ENCODE measurements at regions of chrX and their contacts with region 1.

Region 1: DNA sequence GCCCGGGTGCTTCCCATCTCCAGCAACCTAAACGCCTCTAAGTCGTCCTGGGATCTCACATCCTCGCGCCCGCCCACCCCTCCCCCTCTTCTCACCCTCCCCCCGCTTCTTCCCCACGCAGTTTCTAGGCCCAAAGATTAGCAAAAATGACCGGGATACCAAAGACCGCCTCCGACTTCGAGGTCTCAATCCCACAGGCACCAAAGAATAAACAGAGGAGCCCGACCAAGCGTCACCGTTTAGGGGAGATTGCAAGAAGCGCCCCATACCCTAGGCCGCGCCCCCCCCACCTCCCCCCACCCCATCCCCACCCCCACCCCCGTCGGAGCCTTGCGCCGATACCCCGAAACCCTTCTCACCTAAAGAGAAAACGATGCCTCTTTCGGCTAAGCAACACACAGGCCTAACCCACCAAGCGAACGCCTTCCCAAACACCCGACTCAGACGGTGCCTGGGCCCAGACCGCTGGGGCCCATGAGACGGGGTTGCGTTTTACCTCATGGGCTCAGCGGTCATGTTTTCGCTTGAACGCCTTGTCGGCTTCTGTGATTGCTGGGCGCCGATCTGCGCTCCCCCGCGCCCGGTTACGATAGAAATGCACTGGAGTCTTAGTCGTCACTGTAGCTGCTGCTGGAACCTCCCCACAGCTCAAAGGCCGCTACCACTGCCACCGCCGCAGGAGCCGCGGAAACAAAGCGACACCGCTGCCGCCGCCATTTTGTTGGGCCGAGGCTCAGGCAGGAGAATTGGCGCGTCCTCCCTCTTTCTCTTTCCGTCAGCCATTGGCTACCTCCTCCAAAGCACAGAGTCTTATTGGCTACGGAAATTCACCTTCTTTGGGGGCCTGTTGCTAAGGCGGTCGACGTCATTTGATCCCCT is at the start of gene ATRX:
- DNase-seq: peak; percentile 86
- ATAC-seq: peak; percentile 93
- H3K4me3 ChIP-seq: peak within 1 kb of the TSS; percentile 70 to 89 (median 77)
- H3K4me3 Mint-ChIP-seq: peak within 1 kb of the TSS; percentile 100
- H3K27ac ChIP-seq: peak within 1 kb of the TSS; percentile 96 to 97
- H3K27ac Mint-ChIP-seq: peak within 1 kb of the TSS; percentile 100
- H3K4me1 ChIP-seq: peaks cover 6 to 29% of the 10 kb centered on the region in 2 donors
- H3K4me1 Mint-ChIP-seq: peaks cover 40% of the 10 kb centered on the region
- H3K27me3 ChIP-seq: no peaks in the 10 kb centered on the region
- H3K27me3 Mint-ChIP-seq: no peaks in the 10 kb centered on the region
- CTCF ChIP-seq: no peak
- total RNA-seq, gene ATRX: 173 and 187 TPM in 2 replicates

Region 2: DNA sequence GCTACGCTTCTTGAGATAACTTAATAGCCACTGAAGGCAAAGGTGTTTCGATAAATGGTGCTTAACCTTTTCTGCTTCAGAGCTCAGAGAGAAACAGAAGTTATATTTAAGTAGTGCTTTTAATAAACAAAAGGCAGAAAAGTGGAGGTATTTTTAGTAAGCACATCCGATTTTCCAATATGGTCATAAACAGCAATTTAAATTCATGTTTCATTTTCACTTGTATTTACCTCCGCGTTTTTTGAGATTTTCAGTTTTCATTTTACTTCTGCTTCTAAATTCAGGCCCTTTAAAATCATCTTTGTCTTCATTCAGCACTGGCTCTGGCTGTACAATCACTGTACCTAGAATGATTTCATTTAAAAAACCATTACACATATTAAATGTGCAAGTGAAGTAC is 92.1 kb before region 1 on chrX:
- CTCF ChIA-PET with region 1: no interaction called
- POLR2A ChIA-PET with region 1: no interaction called
- intact Hi-C with region 1: loop called (anchors 10 kb)
- DNase-seq: peak; percentile 5
- ATAC-seq: no peak
- H3K4me3 ChIP-seq: peak overlapping the region in 1 of 5 experiments; percentile 20
- H3K4me3 Mint-ChIP-seq: peak overlapping the region; percentile 60
- H3K27ac ChIP-seq: peak overlapping the region; percentile 33 to 58
- H3K27ac Mint-ChIP-seq: peak overlapping the region; percentile 68
- H3K4me1 ChIP-seq: peaks cover 0 to 3% of the 10 kb centered on the region in 2 donors
- H3K4me1 Mint-ChIP-seq: peaks cover 13% of the 10 kb centered on the region
- H3K27me3 ChIP-seq: no peaks in the 10 kb centered on the region
- H3K27me3 Mint-ChIP-seq: no peaks in the 10 kb centered on the region
- CTCF ChIP-seq: no peak